ENCODE measurements at regions of chr13 and their contacts with region 1.

Region 1: GRCh38 chr13:80040981-80041317 is 300.0 kb downstream of the SPRY2 start:
- DNase-seq: no peak
- H3K4me3 ChIP-seq: no peak overlapping the region
- H3K27me3 ChIP-seq: no peaks in the 10 kb centered on the region
- CTCF ChIP-seq: no peak

Region 2: GRCh38 chr13:80083853-80084676 is 43.1 kb after region 1 on chr13:
- CTCF ChIA-PET with region 1: no interaction called
- POLR2A ChIA-PET with region 1: interaction called, 15 read pairs
- DNase-seq: peak; percentile 92
- H3K4me3 ChIP-seq: peak overlapping the region; percentile 30
- H3K27me3 ChIP-seq: no peaks in the 10 kb centered on the region
- CTCF ChIP-seq: no peak

Region 3: DNA sequence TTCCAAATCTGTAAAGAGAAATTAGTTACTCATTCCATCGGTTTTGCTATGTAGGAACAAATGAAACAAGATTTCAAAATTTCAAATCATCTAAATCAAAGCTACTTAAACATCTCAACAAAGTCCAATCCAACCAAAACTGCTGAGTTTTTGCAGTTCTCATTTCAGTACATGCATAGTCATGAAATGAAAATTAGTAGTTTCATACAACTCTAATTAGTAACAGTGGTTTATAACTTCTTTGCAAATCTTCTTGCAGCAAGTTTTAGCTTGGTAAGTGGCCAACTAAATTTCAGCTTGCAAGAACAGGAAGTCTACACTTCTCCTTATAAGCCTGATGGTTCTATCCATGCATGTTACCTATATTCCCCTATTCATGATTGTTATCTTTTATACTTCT is 224.4 kb after region 1 on chr13:
- CTCF ChIA-PET with region 1: no interaction called
- POLR2A ChIA-PET with region 1: no interaction called
- DNase-seq: no peak
- H3K4me3 ChIP-seq: no peak overlapping the region
- H3K27me3 ChIP-seq: no peaks in the 10 kb centered on the region
- CTCF ChIP-seq: no peak